ENCODE measurements at regions of chr16 and their contacts with region 1.

Region 1: DNA sequence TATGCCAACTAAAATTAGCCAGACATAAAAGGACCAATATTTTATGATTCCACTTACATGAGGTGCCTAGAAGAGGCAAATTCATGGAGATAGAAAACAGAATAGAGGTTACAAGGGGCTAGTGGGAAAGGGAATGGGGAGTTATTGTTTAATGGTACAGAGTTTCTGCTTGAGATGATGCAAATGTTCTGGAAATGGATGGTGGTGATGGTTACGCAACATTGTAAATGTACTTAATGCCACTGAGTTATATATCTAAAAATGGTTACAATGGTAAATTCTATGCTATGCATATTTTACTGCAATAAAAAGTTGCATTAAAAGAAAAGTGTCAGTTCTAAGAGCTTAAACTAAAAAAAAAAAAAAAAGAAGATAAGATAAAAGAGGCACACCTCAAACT is 17.9 kb downstream of the MT1X start:
- DNase-seq: no peak
- ATAC-seq: no peak
- H3K4me3 ChIP-seq: no peak overlapping the region
- H3K4me3 Mint-ChIP-seq: no peak overlapping the region
- H3K27ac ChIP-seq: no peak overlapping the region
- H3K27ac Mint-ChIP-seq: peak overlapping the region in 2 of 9 donors; percentile 45 to 76
- H3K4me1 ChIP-seq: peaks cover 0 to 5% of the 10 kb centered on the region in 2 donors
- H3K4me1 Mint-ChIP-seq: peaks cover 0 to 10% (median 9%) of the 10 kb centered on the region in 7 donors
- H3K27me3 ChIP-seq: no peaks in the 10 kb centered on the region
- H3K27me3 Mint-ChIP-seq: peaks cover 0 to 3% (median 0%) of the 10 kb centered on the region in 5 donors

Region 2: GRCh38 chr16:56513972-56514371 is 186.2 kb before region 1 on chr16:
- CTCF ChIA-PET with region 1: interaction called, 26 read pairs
- POLR2A ChIA-PET with region 1: interaction called, 3 read pairs
- intact Hi-C with region 1: loop called (anchors 1 kb)
- DNase-seq: peak in 7 of 9 donors; percentile 37 to 64 (median 56)
- ATAC-seq: peak; percentile 92
- H3K4me3 ChIP-seq: no peak overlapping the region
- H3K4me3 Mint-ChIP-seq: peak overlapping the region in 2 of 10 donors; percentile 3 to 6
- H3K27ac ChIP-seq: no peak overlapping the region
- H3K27ac Mint-ChIP-seq: peak overlapping the region in 1 of 9 donors; percentile 39
- H3K4me1 ChIP-seq: peaks cover 0 to 19% of the 10 kb centered on the region in 2 donors
- H3K4me1 Mint-ChIP-seq: peaks cover 10 to 77% (median 64%) of the 10 kb centered on the region in 7 donors
- H3K27me3 ChIP-seq: no peaks in the 10 kb centered on the region
- H3K27me3 Mint-ChIP-seq: no peaks in the 10 kb centered on the region

Region 3: GRCh38 chr16:56600398-56600999 is 99.7 kb before region 1 on chr16:
- CTCF ChIA-PET with region 1: interaction called, 14 read pairs
- POLR2A ChIA-PET with region 1: interaction called, 16 read pairs
- intact Hi-C with region 1: loop called in 1 of 2 experiments (anchors 1 kb)
- DNase-seq: peak in 1 of 9 donors; percentile 13
- ATAC-seq: peak; percentile 67
- H3K4me3 ChIP-seq: no peak overlapping the region
- H3K4me3 Mint-ChIP-seq: no peak overlapping the region
- H3K27ac ChIP-seq: no peak overlapping the region
- H3K27ac Mint-ChIP-seq: peak overlapping the region in 1 of 9 donors; percentile 7
- H3K4me1 ChIP-seq: no peaks in the 10 kb centered on the region
- H3K4me1 Mint-ChIP-seq: peaks cover 0 to 13% (median 5%) of the 10 kb centered on the region in 7 donors
- H3K27me3 ChIP-seq: no peaks in the 10 kb centered on the region
- H3K27me3 Mint-ChIP-seq: peaks cover 0 to 36% (median 3%) of the 10 kb centered on the region in 5 donors

Region 4: GRCh38 chr16:56657555-56658326 is 42.5 kb before region 1 on chr16 and contains the start of gene MT1F:
- CTCF ChIA-PET with region 1: interaction called, 10 read pairs
- POLR2A ChIA-PET with region 1: interaction called, 3 read pairs
- intact Hi-C with region 1: loop called in 1 of 2 experiments (anchors 1 kb)
- DNase-seq: peak in 8 of 9 donors; percentile 35 to 66 (median 56)
- ATAC-seq: peak; percentile 80
- H3K4me3 ChIP-seq: peak within 1 kb of the TSS; percentile 91
- H3K4me3 Mint-ChIP-seq: peak within 1 kb of the TSS; percentile 79 to 99 (median 94)
- H3K27ac ChIP-seq: peak within 1 kb of the TSS; percentile 64
- H3K27ac Mint-ChIP-seq: peak within 1 kb of the TSS; percentile 67 to 97 (median 94)
- H3K4me1 ChIP-seq: peaks cover 7 to 12% of the 10 kb centered on the region in 2 donors
- H3K4me1 Mint-ChIP-seq: peaks cover 14 to 46% (median 27%) of the 10 kb centered on the region in 7 donors
- H3K27me3 ChIP-seq: no peaks in the 10 kb centered on the region
- H3K27me3 Mint-ChIP-seq: peaks cover 0 to 21% (median 0%) of the 10 kb centered on the region in 5 donors
- total RNA-seq, gene MT1F: 5.6 to 20.6 (median 8.7) TPM

Region 5: GRCh38 chr16:56681939-56682702 is 18.1 kb before region 1 on chr16 and contains the start of gene MT1X:
- CTCF ChIA-PET with region 1: interaction called, 31 read pairs
- POLR2A ChIA-PET with region 1: interaction called, 12 read pairs
- intact Hi-C with region 1: loop called (anchors 1 kb)
- DNase-seq: peak; percentile 77 to 94 (median 88)
- ATAC-seq: peak; percentile 100
- H3K4me3 ChIP-seq: peak within 1 kb of the TSS; percentile 93
- H3K4me3 Mint-ChIP-seq: peak within 1 kb of the TSS; percentile 86 to 99 (median 96)
- H3K27ac ChIP-seq: peak within 1 kb of the TSS; percentile 81
- H3K27ac Mint-ChIP-seq: peak within 1 kb of the TSS; percentile 89 to 99 (median 95)
- H3K4me1 ChIP-seq: peaks cover 13 to 15% of the 10 kb centered on the region in 2 donors
- H3K4me1 Mint-ChIP-seq: peaks cover 0 to 28% (median 25%) of the 10 kb centered on the region in 7 donors
- H3K27me3 ChIP-seq: no peaks in the 10 kb centered on the region
- H3K27me3 Mint-ChIP-seq: peaks cover 0 to 2% (median 0%) of the 10 kb centered on the region in 5 donors
- total RNA-seq, gene MT1X: 15.0 to 70.7 (median 25.9) TPM